PC-9 (cell line): ENCODE measurements at regions of chr3 and their contacts with region 1.

Region 1: GRCh38 chr3:10122724-10123123 is 7.2 kb downstream of the BRK1 start:
- DNase-seq: no peak
- H3K4me3 ChIP-seq: no peak overlapping the region
- H3K27ac ChIP-seq: no peak overlapping the region
- H3K4me1 ChIP-seq: no peaks in the 10 kb centered on the region
- H3K27me3 ChIP-seq: no peaks in the 10 kb centered on the region
- CTCF ChIP-seq: no peak

Region 2: GRCh38 chr3:10198761-10199649 is 76.3 kb after region 1 on chr3:
- CTCF ChIA-PET with region 1: no interaction called
- POLR2A ChIA-PET with region 1: interaction called, 13 read pairs
- intact Hi-C with region 1: no loop called
- DNase-seq: peak; percentile 66 to 85
- H3K4me3 ChIP-seq: no peak overlapping the region
- H3K27ac ChIP-seq: peak overlapping the region; percentile 96
- H3K4me1 ChIP-seq: peaks cover 82% of the 10 kb centered on the region
- H3K27me3 ChIP-seq: no peaks in the 10 kb centered on the region
- CTCF ChIP-seq: no peak